ENCODE measurements at regions of chr12 and their contacts with region 1.

Region 1: GRCh38 chr12:108562348-108563135 is at the start of gene ISCU:
- DNase-seq: peak; percentile 87 to 98
- H3K4me3 ChIP-seq: peak within 1 kb of the TSS; percentile 72
- H3K27ac ChIP-seq: peak within 1 kb of the TSS; percentile 85
- H3K4me1 ChIP-seq: peaks cover 28% of the 10 kb centered on the region
- H3K27me3 ChIP-seq: no peaks in the 10 kb centered on the region
- CTCF ChIP-seq: no peak
- total RNA-seq, gene ISCU: 84.8 and 86.7 TPM in 2 replicates

Region 2: DNA sequence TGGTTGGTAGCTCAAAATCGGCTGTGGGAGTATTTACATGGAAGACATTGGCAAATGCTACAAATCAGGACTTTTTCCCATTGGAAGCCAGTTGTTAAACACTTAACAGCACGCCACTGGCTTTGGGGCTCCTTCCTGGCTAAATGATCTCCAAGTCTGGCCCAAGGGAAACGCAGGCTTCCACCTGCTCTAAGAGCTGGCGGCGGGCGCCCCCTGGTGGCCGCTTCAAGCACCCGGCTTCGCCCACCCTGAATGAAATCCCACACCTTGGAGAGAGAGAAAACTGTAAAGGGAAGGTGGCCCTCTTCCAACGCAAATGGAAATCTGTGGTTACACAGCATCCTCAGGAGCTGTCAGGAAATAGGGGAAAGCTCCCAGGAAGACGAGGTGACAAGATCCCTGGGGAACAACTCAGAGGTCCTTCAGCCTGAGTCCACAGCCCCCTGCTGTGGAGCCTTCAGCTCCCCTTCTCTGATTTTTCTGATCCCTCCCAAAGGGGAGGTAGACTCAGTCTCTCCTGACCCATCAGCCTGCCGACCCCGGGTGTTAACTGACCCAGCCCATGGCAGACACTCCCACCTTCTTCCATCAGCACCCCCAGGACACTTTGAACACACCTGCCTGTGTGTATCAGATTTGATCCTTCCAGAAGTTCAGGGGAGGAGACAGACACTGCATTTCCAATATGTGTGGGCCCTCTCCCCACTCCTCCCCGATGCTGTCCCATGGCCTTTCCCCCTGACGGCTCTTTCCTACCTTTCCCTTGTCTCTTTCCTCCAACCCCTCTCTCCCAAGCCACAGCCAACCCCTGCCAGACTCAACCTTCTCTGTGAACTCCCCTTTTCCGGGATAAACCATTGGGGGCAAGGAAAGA is 55.8 kb after region 1 on chr12:
- CTCF ChIA-PET with region 1: no interaction called
- POLR2A ChIA-PET with region 1: no interaction called
- intact Hi-C with region 1: loop called (anchors 1 kb)
- DNase-seq: peak; percentile 58 to 77
- H3K4me3 ChIP-seq: no peak overlapping the region
- H3K27ac ChIP-seq: no peak overlapping the region
- H3K4me1 ChIP-seq: peaks cover 16% of the 10 kb centered on the region
- H3K27me3 ChIP-seq: no peaks in the 10 kb centered on the region
- CTCF ChIP-seq: peak; percentile 98

Region 3: GRCh38 chr12:108664338-108665258 is 102.1 kb after region 1 on chr12:
- CTCF ChIA-PET with region 1: interaction called, 3 read pairs
- POLR2A ChIA-PET with region 1: no interaction called
- intact Hi-C with region 1: loop called (anchors 10 kb)
- DNase-seq: peak; percentile 84 to 88
- H3K4me3 ChIP-seq: no peak overlapping the region
- H3K27ac ChIP-seq: peak overlapping the region; percentile 51
- H3K4me1 ChIP-seq: peaks cover 7% of the 10 kb centered on the region
- H3K27me3 ChIP-seq: no peaks in the 10 kb centered on the region
- CTCF ChIP-seq: peak; percentile 95

Region 4: DNA sequence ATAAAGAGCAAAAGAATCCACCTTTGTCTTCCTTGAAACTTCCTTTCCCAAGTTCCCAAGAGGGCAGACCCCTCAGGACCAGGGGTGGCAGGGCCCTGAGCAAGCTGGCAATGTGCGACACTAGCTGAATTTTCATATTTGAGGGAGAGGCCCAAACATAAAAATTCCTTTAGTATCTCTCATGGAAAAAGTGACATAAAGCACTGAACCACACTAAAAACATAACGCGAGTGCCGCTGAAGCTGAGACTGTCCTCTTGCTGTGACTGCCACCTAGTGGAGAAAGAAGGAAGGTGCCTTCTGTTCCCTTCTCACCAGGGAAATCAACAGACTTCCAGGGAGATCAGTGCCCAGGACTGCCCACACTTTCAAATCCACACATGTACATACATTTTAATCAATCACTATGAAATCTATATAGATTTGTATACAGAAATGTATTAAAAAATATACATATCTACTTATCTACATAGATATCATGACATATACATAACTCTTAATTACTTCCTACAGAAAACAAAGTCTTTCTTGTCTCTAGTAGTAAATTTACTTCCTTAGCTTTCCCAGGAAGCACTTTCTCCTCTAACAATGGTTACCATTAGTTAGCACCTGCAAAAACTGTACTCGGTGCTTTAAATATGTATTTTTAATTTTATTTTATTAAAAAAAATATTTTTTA is 241.0 kb after region 1 on chr12:
- CTCF ChIA-PET with region 1: no interaction called
- POLR2A ChIA-PET with region 1: no interaction called
- intact Hi-C with region 1: loop called (anchors 1 kb)
- DNase-seq: peak; percentile 58 to 65
- H3K4me3 ChIP-seq: no peak overlapping the region
- H3K27ac ChIP-seq: no peak overlapping the region
- H3K4me1 ChIP-seq: no peaks in the 10 kb centered on the region
- H3K27me3 ChIP-seq: no peaks in the 10 kb centered on the region
- CTCF ChIP-seq: peak; percentile 94

Region 5: DNA sequence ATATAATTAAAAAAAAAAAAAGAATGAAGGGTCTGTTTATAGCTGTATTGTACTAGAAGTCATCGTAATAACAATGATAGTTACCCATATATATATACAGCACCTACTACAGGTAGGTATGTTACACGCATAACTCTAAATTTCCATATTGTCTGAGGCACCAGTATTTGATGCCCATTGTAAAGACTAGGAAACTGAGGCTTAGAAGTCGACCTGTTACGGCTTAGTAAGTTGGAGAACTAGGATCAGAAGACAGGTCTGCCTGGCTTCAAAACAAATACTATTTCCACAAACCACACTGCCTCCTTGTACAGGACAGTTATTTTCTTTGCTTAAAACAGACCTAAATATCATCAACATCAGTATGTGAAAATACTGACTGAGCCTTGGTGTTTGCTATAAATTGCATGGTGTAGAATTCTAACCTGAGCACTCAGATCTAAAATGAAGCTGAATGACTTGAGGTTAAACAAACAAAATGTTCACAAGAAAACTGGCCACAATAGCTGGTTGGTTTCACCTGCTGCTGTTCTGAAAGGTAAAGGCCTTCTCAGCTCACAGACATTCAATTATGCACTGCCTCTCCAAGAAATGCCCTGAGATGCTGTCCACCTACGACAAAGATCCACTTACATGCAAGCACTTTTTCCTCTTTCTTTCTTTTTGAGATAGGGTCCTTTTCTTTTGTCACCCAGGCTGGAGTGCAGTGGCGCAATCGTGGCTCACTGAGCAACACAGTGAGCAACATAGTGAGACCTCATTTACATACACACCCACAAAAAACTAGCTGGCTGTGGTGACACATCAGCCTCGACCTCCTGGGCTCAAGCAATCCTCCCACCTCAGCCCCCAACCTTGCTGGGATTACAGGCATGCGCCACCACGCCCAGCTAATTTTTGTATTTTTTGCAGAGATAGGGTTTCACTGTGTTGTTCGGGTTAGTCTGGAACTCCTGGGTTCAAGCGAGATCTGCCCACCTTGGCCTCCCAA is 259.2 kb after region 1 on chr12:
- CTCF ChIA-PET with region 1: no interaction called
- POLR2A ChIA-PET with region 1: no interaction called
- intact Hi-C with region 1: no loop called
- DNase-seq: peak; percentile 11 to 54
- H3K4me3 ChIP-seq: no peak overlapping the region
- H3K27ac ChIP-seq: peak overlapping the region; percentile 40
- H3K4me1 ChIP-seq: peaks cover 15% of the 10 kb centered on the region
- H3K27me3 ChIP-seq: no peaks in the 10 kb centered on the region
- CTCF ChIP-seq: no peak

Region 6: DNA sequence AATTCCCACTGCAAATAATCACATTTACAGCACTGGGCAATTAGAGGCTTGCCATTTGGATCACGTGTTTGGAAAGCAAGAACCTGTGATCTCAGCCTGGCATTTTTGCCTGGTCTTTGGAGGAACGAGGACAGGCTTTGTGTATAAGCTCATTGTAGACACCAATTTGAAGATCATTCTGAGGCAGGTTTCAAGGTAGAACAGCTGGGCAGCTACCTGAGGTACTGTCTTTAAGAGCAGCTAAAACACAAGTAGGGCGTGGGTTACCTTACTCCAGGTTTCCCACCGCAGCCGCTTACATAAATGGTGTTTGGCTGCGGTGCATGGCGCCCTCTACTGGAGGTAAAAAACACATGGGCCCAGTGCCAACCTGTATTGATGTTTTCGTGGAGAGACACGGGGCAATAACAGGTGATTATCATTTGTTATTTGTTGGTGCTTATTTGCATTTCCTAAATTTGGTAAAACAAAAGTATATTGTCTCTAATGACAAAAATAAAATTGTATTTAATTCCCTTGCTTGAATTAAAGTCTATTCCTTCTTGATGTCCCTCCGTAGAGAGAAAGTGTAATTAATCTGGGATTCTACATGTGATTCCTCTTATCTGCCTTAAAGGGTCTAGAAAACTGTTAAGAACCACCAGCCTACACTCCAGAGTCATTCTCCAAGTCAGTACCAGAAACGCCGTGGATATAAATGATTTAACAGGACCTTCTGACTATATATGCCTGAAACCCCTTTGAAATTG is 388.6 kb after region 1 on chr12:
- CTCF ChIA-PET with region 1: no interaction called
- POLR2A ChIA-PET with region 1: no interaction called
- intact Hi-C with region 1: loop called (anchors 1 kb)
- DNase-seq: peak; percentile 41 to 73
- H3K4me3 ChIP-seq: no peak overlapping the region
- H3K27ac ChIP-seq: no peak overlapping the region
- H3K4me1 ChIP-seq: no peaks in the 10 kb centered on the region
- H3K27me3 ChIP-seq: peaks cover 30% of the 10 kb centered on the region
- CTCF ChIP-seq: peak; percentile 97

Region 7: GRCh38 chr12:109093022-109093918 is 530.7 kb after region 1 on chr12 and contains the start of gene ALKBH2:
- CTCF ChIA-PET with region 1: no interaction called
- POLR2A ChIA-PET with region 1: no interaction called
- intact Hi-C with region 1: loop called (anchors 1 kb)
- DNase-seq: peak; percentile 82 to 89
- H3K4me3 ChIP-seq: peak within 1 kb of the TSS; percentile 72
- H3K27ac ChIP-seq: peak within 1 kb of the TSS; percentile 26; the same call in 1 of the 2 replicates
- H3K4me1 ChIP-seq: peaks cover 18% of the 10 kb centered on the region; the same call in 1 of the 2 replicates
- H3K27me3 ChIP-seq: no peaks in the 10 kb centered on the region
- CTCF ChIP-seq: peak; percentile 90
- total RNA-seq, gene ALKBH2: 14.9 and 15.2 TPM in 2 replicates

Measured in PC-9 (cell line).